Transverse colon (tissue), 4 donors: ENCODE measurements at regions of chr11 and their contacts with region 1.

Region 1: DNA sequence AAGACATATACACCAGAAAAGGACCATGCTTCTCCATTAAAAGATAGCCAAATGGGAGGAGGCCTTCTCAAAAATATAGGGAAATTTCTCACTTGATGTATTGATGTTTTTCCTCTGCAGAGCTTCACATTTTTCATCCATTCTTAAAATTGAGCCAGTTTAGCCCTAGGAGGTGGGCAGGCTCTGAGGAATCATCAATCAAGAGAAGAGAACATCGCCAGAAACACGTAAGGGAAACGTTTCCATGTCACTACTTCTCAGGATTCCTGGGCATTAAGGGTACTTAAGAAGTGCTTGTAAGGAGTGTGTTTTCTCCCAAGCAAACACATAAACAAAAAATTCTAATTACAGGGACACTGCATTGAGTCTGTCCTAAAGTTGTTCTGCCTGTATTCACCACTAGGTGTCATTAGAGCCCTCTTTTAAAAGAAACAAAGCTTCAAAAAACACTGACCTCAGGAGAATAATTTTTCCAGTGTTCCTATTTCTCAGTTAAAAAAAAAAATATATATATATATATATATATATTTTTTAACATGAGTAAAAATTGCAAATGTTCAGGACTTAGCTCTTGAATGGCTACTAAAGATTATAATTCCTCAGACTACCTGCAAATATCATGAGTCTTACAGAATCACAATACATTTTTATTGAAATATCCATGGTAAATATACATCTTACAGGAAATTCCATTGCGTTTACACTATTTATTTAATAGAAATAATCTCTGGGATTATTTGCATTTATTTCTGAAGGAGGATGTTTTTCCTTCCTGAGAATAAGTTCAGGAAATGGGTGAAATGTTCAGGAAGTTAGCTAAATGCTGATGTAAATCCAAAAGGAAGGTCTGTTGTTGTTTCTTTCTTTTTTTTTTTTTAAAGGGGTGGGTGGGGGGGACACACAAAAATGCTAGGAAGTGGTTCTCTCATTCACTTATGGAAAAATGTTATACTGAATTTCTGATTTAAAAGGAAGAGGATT is 16.0 kb downstream of the FZD4 start:
- DNase-seq: no peak
- H3K4me3 ChIP-seq: no peak overlapping the region
- H3K27ac ChIP-seq: peak overlapping the region; percentile 60 to 81 (median 72)
- H3K4me1 ChIP-seq: peaks cover 17 to 57% (median 26%) of the 10 kb centered on the region in 4 donors
- H3K27me3 ChIP-seq: no peaks in the 10 kb centered on the region
- CTCF ChIP-seq: peak; percentile 62 to 83 (median 76)
- EP300 ChIP-seq: no peak
- POLR2A ChIP-seq: no peak

Region 2: GRCh38 chr11:86869966-86870570 is 69.1 kb before region 1 on chr11:
- in situ Hi-C with region 1: loop called in 1 of 4 experiments (anchors 10 kb)
- intact Hi-C with region 1: no loop called
- DNase-seq: peak; percentile 44
- H3K4me3 ChIP-seq: no peak overlapping the region
- H3K27ac ChIP-seq: no peak overlapping the region
- H3K4me1 ChIP-seq: no peaks in the 10 kb centered on the region
- H3K27me3 ChIP-seq: no peaks in the 10 kb centered on the region
- CTCF ChIP-seq: peak; percentile 73 to 84 (median 75)
- EP300 ChIP-seq: no peak
- POLR2A ChIP-seq: no peak

Region 3: DNA sequence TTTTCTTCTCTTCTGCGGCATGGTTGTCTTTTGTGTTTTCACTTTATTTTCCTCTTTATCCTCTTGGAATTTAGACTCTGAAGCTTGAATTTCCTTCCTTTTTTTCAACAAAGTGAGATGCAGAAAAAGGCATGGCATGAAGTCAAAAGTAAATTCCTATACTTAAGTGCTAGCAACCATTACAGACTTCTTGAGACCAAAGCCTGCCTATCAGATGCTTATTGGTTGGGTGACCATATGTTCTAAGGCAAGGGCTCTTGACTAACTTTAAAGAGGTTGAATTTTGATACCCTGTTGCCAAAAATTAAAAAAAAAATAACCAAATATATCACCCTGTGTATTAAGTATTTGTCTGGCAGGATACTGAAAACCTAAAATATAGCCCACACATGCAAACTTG is 336.0 kb after region 1 on chr11:
- in situ Hi-C with region 1: loop called in 2 of 4 experiments (anchors 10 kb)
- intact Hi-C with region 1: no loop called
- DNase-seq: no peak
- H3K4me3 ChIP-seq: no peak overlapping the region
- H3K27ac ChIP-seq: no peak overlapping the region
- H3K4me1 ChIP-seq: no peaks in the 10 kb centered on the region
- H3K27me3 ChIP-seq: no peaks in the 10 kb centered on the region
- CTCF ChIP-seq: no peak
- EP300 ChIP-seq: no peak
- POLR2A ChIP-seq: no peak

Region 4: DNA sequence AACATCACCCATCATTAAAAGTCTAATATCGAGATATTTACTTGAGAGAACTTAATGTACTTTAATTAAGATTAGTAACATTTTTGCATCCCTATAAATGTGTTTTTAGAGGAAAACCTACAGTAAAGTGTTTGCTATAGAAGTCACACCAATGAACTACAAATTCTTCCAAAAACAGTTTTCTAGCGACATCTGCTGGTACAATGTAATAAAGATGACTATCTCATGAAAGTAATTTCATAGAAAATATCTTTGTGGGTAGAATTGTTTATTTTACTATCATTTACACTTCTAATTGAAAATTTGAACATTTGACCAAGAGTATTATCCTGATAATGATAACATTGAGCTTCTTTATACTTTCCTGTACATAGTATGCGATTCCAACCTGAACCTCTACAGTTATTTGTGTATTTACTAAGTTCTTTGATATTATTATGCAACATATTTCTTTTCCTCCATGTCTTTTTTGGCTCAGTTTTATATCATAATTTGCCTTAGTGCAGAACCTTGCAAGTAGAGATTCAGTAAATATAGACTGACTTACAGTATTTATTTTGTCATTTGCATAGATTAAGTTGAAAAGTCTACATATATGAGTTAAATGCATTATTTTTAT is 351.2 kb after region 1 on chr11:
- in situ Hi-C with region 1: loop called in 2 of 4 experiments (anchors 10 kb)
- intact Hi-C with region 1: loop called (anchors 2 kb)
- DNase-seq: no peak
- H3K4me3 ChIP-seq: no peak overlapping the region
- H3K27ac ChIP-seq: no peak overlapping the region
- H3K4me1 ChIP-seq: no peaks in the 10 kb centered on the region
- H3K27me3 ChIP-seq: no peaks in the 10 kb centered on the region
- CTCF ChIP-seq: peak; percentile 55 to 68 (median 59)
- EP300 ChIP-seq: no peak
- POLR2A ChIP-seq: no peak

Region 5: GRCh38 chr11:87421422-87421821 is 482.2 kb after region 1 on chr11:
- in situ Hi-C with region 1: loop called in 3 of 4 experiments (anchors 25 kb)
- intact Hi-C with region 1: no loop called
- DNase-seq: peak; percentile 22
- H3K4me3 ChIP-seq: no peak overlapping the region
- H3K27ac ChIP-seq: no peak overlapping the region
- H3K4me1 ChIP-seq: peaks cover 0 to 4% (median 0%) of the 10 kb centered on the region in 4 donors
- H3K27me3 ChIP-seq: no peaks in the 10 kb centered on the region
- CTCF ChIP-seq: peak; percentile 77 to 84 (median 79)
- EP300 ChIP-seq: no peak
- POLR2A ChIP-seq: no peak